Right ventricle myocardium inferior (tissue), 1 donor: ENCODE measurements at regions of chr21 and their contacts with region 1.

Region 1: GRCh38 chr21:29024474-29025327 is at the start of gene USP16:
- DNase-seq: peak; percentile 95
- ATAC-seq: peak; percentile 99
- total RNA-seq, gene USP16: 30.4 TPM

Region 2: GRCh38 chr21:28992526-28993292 is 32.0 kb before region 1 on chr21 and contains the start of gene LTN1:
- intact Hi-C with region 1: loop called (anchors 5 kb)
- DNase-seq: peak; percentile 98
- ATAC-seq: peak; percentile 100
- total RNA-seq, gene LTN1: 16.6 TPM

Region 3: DNA sequence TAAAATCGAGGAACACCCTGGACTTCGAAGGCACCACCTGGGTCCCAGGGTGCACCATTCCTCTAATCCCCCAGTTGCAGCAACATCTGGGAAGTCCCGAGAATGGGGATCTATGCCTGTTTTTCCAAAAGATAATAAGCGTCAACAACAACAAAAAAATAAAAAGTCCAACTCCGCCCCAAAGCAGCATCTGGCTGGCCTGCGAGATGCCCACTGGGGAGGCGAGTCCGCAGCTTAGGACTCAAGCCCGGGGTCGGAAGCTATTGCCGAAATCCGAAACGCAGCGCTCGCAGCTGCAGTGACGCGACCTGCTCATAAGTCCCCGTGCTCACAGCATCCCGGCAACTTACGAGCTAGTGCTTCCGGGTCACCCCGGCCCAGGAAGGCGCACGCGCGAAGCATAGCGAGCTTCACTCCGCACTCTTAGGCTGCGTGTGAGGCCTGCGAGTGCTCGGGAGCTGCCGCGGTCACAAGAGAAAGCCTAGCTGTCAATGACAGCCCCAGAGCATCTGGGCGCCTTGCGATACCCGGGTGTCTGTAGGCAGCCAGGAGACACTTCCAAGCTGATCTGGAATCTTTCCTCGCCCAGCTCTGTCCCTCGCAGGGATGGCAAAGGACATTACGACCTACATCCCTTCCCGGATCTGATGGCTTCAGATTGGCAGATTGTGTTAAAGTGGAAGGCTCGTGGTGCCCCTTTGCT is 22.1 kb before region 1 on chr21:
- intact Hi-C with region 1: loop called (anchors 1 kb)
- DNase-seq: peak; percentile 97
- ATAC-seq: peak; percentile 100

Region 4: DNA sequence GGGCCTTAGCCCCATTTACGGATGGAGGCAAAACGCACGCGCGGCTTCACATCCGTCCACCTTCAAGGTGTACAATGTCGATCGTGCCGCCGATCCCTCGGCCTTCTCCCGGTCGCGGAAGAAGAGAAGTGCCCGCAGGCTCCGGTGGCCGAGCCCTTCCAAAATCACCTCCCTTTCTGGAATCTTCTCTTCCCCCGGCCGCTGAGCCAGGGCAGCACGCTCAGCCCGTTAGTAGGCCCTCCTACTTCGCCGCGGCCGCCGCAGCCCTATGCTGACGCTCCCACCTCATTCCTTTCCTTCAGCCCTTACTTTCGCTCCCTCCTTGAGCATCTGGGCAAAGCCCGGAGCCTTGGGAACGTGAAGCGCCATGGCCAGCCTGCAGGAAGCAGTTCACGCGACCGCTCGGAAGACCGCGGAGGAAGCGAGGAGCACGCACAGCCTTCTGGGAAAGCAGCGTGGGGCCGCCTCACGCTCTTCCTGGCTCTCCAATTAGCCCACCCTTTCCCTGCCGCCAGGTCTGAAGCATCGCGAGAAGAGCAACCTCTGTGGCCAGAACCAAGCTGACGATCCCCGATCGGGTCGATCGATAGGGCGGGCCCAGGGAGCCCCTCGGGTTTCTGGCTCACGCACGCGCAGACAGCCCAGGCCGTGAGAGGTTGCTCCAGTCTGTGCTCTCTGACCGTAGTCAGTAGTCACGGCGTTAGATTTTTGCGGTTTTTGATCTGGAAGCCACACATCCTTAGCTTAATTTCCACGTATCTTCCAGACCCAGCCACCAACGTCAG is 48.7 kb after region 1 on chr21 and contains the start of gene CCT8:
- intact Hi-C with region 1: loop called (anchors 2 kb)
- DNase-seq: peak; percentile 99
- ATAC-seq: peak; percentile 98
- total RNA-seq, gene CCT8: 110 TPM